Sigmoid colon (tissue), 7 donors: ENCODE measurements at regions of chr2 and their contacts with region 1.

Region 1: GRCh38 chr2:127637725-127638252 is 8.2 kb upstream of the GPR17 start:
- DNase-seq: no peak
- H3K4me3 ChIP-seq: no peak overlapping the region
- H3K27ac ChIP-seq: peak overlapping the region; percentile 85 to 97 (median 92)
- H3K4me1 ChIP-seq: peaks cover 0 to 95% (median 79%) of the 10 kb centered on the region in 4 donors
- H3K27me3 ChIP-seq: no peaks in the 10 kb centered on the region
- CTCF ChIP-seq: no peak
- EP300 ChIP-seq: no peak
- POLR2A ChIP-seq: no peak

Region 2: GRCh38 chr2:127681288-127681804 is 43.6 kb after region 1 on chr2:
- intact Hi-C with region 1: loop called (anchors 10 kb)
- DNase-seq: peak; percentile 90
- H3K4me3 ChIP-seq: peak overlapping the region; percentile 15 to 41 (median 28)
- H3K27ac ChIP-seq: peak overlapping the region; percentile 65 to 88 (median 83)
- H3K4me1 ChIP-seq: peaks cover 0 to 96% (median 68%) of the 10 kb centered on the region in 4 donors
- H3K27me3 ChIP-seq: no peaks in the 10 kb centered on the region
- CTCF ChIP-seq: no peak
- EP300 ChIP-seq: no peak
- POLR2A ChIP-seq: no peak